PC-3 (cell line): ENCODE measurements at regions of chr15 and their contacts with region 1.

Region 1: DNA sequence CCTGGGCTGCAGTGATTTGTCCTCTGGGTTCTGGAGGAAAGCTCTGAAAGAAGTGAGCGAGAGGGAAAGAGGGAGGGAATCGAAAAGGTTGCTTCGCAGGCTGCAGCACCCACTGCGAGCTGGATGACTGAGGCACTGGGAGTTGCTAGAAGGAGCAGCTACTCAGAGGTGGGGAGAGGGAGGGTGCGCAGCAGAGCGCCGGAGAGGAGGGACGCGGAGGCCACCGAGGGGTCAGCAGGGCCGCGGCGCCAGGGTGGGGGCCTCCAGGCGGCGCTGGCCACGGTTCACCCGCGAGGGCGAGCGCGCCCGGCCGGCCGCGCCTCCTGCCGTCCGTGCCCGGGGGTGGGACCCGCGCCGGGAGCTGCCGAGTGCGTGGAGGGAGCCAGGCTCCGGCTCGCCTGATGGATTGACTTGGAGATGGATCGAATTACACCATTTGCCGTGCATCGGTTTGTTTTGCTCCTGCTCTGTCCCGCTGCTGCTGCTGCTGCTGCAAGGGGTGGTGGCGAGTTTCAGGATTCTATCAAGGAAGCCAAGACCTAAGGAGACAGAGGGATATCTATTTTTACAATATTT is at the start of gene SEMA6D:
- DNase-seq: peak; percentile 73
- ATAC-seq: peak; percentile 81
- H3K4me3 ChIP-seq: peak within 1 kb of the TSS; percentile 82
- H3K27ac ChIP-seq: no peak within 1 kb of the TSS
- H3K4me1 ChIP-seq: peaks cover 9% of the 10 kb centered on the region; the same call in 1 of the 2 replicates
- H3K27me3 ChIP-seq: no peaks in the 10 kb centered on the region
- CTCF ChIP-seq: peak; percentile 45; the same call in 1 of the 2 replicates
- total RNA-seq, gene SEMA6D: 0.52 and 0.91 TPM in 2 replicates

Region 2: GRCh38 chr15:47196057-47196456 is 521.1 kb before region 1 on chr15:
- CTCF ChIA-PET with region 1: no interaction called
- POLR2A ChIA-PET with region 1: no interaction called
- intact Hi-C with region 1: loop called (anchors 5 kb)
- DNase-seq: peak; percentile 80
- ATAC-seq: peak; percentile 97
- H3K4me3 ChIP-seq: no peak overlapping the region
- H3K27ac ChIP-seq: no peak overlapping the region
- H3K4me1 ChIP-seq: no peaks in the 10 kb centered on the region
- H3K27me3 ChIP-seq: no peaks in the 10 kb centered on the region
- CTCF ChIP-seq: peak; percentile 73

Region 3: DNA sequence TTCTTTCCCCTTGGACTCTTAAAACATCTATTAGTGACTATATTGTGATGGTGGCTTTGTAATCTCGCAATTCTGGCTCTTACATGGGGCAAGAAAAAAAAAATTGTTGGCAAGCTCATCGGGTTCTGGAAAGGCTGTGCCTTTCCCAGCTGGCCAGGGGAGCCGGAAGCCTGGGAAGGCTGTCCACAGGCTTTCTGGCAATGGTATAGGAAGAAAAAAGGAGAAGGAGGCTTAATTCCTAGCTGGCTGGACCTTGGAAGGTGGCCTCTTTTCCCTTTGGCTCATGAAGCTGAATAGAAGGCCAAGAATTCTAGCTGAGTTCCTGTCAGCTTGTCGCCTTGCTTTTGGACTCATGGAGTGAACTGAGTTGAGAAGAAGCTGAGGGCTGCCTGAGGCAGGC is 243.3 kb before region 1 on chr15:
- CTCF ChIA-PET with region 1: no interaction called
- POLR2A ChIA-PET with region 1: no interaction called
- intact Hi-C with region 1: loop called (anchors 1 kb)
- DNase-seq: no peak
- ATAC-seq: no peak
- H3K4me3 ChIP-seq: no peak overlapping the region
- H3K27ac ChIP-seq: no peak overlapping the region
- H3K4me1 ChIP-seq: peaks cover 3% of the 10 kb centered on the region; the same call in 1 of the 2 replicates
- H3K27me3 ChIP-seq: no peaks in the 10 kb centered on the region
- CTCF ChIP-seq: no peak

Region 4: DNA sequence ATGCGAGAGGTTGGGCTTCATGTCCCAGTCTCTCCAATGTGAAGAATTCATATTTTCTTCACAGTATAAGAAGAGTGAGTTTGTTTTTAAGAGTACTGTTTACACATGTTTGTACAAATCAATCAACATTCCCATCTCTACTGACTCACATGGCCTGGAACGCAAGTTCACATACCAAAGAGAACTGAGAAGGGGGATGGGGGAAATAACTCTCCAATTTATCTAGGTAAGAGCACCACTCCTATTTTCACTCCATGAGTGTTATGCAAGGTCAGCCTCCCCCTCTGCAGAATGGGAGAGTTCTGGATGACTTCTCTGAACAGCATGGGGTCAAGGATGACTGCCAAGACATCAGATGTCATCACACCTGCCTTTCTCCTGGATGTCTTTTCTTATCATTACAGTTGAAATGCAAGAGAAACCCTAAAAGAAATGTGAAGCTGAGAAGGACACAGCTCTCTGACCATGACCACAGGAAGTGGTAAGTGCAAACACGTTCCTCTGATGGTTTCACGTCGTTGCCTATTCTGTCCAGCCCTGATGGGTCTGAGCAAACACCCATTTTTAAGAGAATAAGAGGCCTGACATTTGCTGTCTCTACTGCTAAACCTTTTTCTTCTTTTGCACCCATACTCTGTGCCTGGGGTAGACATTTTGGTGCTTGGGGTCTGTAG is 95.4 kb after region 1 on chr15:
- CTCF ChIA-PET with region 1: no interaction called
- POLR2A ChIA-PET with region 1: no interaction called
- intact Hi-C with region 1: loop called (anchors 1 kb)
- DNase-seq: peak; percentile 92
- ATAC-seq: peak; percentile 96
- H3K4me3 ChIP-seq: no peak overlapping the region; the same call in 1 of the 2 replicates
- H3K27ac ChIP-seq: peak overlapping the region; percentile 47
- H3K4me1 ChIP-seq: peaks cover 29% of the 10 kb centered on the region
- H3K27me3 ChIP-seq: no peaks in the 10 kb centered on the region
- CTCF ChIP-seq: no peak

Region 5: DNA sequence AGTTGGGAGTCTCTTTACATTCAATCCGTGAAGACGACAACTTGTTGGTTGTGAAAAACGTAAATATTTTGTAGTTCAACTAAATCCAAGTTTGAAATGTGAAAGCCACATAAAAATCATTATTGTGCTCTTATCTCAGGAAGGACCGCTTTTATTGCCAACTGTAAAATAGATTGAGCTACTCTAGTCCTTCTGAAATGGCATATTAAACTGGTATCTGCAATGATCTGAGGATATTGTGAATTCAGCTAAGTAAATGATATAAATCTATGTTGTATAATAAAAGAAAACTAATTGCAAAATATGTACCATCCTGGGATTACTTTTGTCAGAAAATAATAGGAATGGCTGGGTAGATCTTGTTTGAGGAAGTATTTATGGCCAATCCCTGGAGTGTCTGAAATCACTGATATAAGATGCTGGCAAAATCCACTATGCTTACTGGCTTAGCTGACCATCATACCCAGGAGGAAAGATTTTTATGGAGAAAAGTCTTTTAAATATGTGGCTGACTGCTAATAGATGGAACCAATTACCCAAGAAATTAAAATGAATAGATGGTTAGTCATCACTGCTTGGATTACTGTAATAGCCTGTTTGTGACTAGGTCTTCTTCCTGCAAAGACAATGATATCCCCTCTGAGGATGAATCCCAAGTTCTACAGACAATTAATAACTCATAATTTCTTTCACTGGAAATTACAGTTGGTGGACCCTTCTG is 192.0 kb after region 1 on chr15:
- CTCF ChIA-PET with region 1: no interaction called
- POLR2A ChIA-PET with region 1: no interaction called
- intact Hi-C with region 1: loop called (anchors 5 kb)
- DNase-seq: peak; percentile 10
- ATAC-seq: peak; percentile 45; the same call in 1 of the 2 replicates
- H3K4me3 ChIP-seq: no peak overlapping the region
- H3K27ac ChIP-seq: no peak overlapping the region
- H3K4me1 ChIP-seq: no peaks in the 10 kb centered on the region; the same call in 1 of the 2 replicates
- H3K27me3 ChIP-seq: no peaks in the 10 kb centered on the region
- CTCF ChIP-seq: no peak

Region 6: GRCh38 chr15:48084759-48085590 is 367.9 kb after region 1 on chr15:
- CTCF ChIA-PET with region 1: no interaction called
- POLR2A ChIA-PET with region 1: no interaction called
- intact Hi-C with region 1: loop called (anchors 5 kb)
- DNase-seq: peak; percentile 37
- ATAC-seq: peak; percentile 63
- H3K4me3 ChIP-seq: no peak overlapping the region
- H3K27ac ChIP-seq: no peak overlapping the region
- H3K4me1 ChIP-seq: no peaks in the 10 kb centered on the region
- H3K27me3 ChIP-seq: peaks cover 17% of the 10 kb centered on the region
- CTCF ChIP-seq: peak; percentile 60